ENCODE measurements at regions of chr17 and their contacts with region 1.

Region 1: DNA sequence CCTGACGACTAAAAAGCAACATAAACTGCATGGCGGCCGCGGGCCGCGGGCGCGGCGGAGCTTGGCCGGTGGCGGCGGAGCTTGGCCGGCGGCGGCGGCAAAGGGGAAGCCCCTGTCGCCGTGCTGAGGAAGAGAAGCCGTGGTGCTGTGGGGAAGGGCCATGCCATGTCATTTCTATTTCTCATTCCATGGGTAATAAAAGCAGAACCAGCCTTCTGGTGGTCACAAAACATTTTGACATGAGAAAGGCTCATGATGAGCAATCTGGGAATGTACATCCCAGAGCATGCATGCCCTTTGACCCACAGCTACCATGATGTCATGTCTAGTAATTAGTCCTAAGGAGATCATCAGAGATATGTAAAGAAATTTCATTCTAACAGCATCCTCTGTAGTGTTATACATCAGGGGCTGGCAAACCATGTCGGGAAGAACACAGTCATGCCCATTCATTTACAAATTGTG is 23.9 kb upstream of the HEATR6 start:
- DNase-seq: peak in 2 of 10 donors; percentile 16 to 53
- H3K4me3 ChIP-seq: peak overlapping the region in 48 of 59 donors; percentile 0 to 55 (median 34)
- H3K27ac ChIP-seq: peak overlapping the region in 50 of 59 donors; percentile 0 to 79 (median 54)
- H3K27me3 ChIP-seq: no peaks in the 10 kb centered on the region
- CTCF ChIP-seq: no peak

Region 2: DNA sequence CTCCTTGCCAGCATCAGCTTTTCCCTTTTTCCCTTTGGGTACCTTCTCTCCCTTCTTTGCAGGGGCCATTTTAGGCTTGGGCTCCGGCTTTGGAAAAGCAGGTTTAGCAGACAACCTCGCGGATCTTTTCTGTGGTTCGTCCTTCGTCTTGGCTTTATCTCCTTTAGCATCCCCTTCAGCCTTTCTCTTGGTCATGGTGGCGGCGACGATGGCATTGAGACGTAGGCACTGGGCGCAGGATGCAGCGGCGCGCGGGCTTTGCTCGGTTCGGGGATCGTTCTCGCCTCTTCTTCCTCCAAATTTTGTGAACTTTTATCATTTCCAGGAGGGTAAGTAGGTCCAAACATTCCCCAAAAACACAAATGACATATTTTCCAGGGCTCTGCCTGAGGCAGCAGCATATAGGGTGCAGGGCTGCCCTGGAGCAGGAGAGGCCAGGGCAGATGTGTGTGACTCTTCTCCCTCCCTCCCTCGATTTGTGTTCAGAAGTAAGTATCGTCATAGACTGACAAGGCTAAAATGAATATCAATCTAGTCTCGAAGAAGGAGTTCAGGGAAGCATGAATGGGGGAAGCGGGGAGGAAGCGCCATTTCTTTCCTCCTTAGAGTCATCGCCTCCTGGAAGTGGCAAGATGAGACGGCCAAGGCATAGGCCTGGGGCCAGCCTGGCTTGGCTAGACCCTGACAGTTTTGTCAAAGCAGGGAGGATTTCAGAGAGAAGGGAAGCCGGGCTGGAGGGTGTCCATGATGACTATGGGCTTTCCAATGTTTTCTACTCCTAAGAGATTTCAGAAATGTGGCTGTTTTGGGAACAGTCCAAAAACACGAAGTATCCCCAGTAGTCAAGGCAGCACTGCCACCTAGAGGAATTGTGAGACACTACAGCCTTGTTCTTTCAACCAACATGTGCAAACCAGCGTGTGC is 332.8 kb after region 1 on chr17:
- intact Hi-C with region 1: loop called (anchors 10 kb)
- DNase-seq: peak in 8 of 10 donors; percentile 45 to 84 (median 67)
- H3K4me3 ChIP-seq: peak overlapping the region in 33 of 59 donors; percentile 1 to 50 (median 30)
- H3K27ac ChIP-seq: peak overlapping the region in 47 of 59 donors; percentile 11 to 84 (median 68)
- H3K27me3 ChIP-seq: no peaks in the 10 kb centered on the region
- CTCF ChIP-seq: peak; percentile 73 to 99 (median 96)